ENCODE measurements at regions of chr11 and their contacts with region 1.

Region 1: GRCh38 chr11:127345819-127346459 is 345.4 kb upstream of the KIRREL3 start:
- DNase-seq: no peak
- ATAC-seq: no peak
- H3K4me3 ChIP-seq: no peak overlapping the region
- H3K27ac ChIP-seq: no peak overlapping the region
- H3K4me1 ChIP-seq: no peaks in the 10 kb centered on the region
- H3K27me3 ChIP-seq: no peaks in the 10 kb centered on the region
- CTCF ChIP-seq: peak in 3 of 5 experiments; percentile 34 to 60 (median 52)
- POLR2A ChIP-seq: no peak

Region 2: DNA sequence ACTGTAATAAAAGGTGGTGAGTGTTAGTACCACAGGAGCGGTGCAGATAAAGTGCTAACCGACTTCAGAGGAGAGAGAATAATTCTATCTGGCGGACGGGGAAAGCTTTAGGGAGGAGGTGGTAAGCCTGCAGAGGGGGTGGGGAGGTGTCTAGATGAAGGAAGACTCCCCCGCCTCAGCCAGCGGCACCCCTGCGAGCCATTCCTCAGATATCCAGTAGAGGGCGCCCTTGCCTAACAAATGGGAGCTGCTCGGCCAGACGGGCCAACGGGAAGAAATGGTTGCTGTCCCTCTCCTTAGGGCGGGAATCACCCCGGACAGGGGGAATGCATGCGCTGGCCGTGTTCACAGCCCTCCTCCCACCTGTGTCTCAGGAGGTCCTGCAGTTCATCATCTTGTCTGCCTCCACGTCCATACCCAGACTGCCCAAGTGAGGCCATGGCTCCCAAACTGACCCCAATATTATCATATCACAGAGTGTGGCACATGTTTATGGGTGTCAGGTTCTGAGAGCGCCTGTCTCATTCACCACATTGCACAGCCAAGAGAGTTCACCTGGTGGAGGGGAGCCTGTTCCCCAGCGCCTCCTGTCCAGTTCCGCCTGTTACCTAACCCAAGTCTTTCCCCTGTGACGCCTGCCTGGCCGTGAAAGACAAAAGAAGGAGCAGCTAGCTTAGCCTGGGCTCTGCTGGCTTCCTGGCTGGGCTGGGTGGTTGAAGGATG is 905.0 kb before region 1 on chr11:
- in situ Hi-C with region 1: loop called in 3 of 4 experiments (anchors 10 to 25 kb)
- intact Hi-C with region 1: loop called (anchors 2 kb)
- DNase-seq: peak; percentile 46 to 50
- ATAC-seq: peak; percentile 55 to 85
- H3K4me3 ChIP-seq: no peak overlapping the region
- H3K27ac ChIP-seq: no peak overlapping the region
- H3K4me1 ChIP-seq: no peaks in the 10 kb centered on the region
- H3K27me3 ChIP-seq: peaks cover 0 to 3% (median 0%) of the 10 kb centered on the region in 3 donors
- CTCF ChIP-seq: peak; percentile 91 to 96 (median 93)
- POLR2A ChIP-seq: no peak